Sciatic nerve (tissue), 2 donors: ENCODE measurements at regions of chr6 and their contacts with region 1.

Region 1: DNA sequence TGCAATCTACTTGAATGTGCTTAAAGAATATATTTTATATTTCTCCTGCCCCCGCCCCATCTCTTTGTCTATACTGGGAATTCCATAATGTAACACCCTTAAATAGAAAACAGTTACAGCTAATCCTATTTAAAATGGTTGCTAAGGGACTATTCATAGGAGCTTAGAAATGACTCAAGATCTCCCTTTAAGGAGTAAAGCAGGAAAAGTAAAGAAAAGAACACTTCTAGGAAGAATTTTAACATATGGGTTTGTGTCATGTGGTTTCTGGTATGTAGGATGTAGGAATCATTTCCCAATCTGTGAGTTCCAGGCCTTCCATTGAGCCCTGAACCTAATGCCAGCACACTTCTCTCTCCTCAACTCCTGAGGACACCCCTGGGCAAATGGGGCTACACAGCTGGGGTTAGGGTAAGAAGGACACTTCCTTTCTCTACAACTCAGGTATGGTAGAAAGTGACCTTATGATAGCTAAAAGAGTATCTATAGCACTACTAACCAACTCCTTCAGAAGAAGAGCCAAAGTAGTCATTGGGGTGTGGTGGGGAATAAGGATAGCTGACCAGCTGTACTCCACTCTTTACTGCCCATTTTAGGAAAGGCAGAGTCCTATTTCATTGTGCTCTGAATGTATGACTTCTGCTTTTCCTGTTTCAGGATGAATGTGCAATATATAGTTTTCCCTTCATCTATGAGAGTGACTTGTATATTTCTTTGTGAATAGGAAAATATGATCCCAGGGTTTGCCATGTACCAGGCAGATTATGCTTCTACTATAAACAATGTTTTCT is 27.3 kb downstream of the RIMS1 start:
- DNase-seq: no peak
- ATAC-seq: no peak

Region 2: GRCh38 chr6:70933853-70934252 is 979.8 kb before region 1 on chr6:
- intact Hi-C with region 1: loop called (anchors 5 kb)
- DNase-seq: no peak
- ATAC-seq: no peak

Region 3: DNA sequence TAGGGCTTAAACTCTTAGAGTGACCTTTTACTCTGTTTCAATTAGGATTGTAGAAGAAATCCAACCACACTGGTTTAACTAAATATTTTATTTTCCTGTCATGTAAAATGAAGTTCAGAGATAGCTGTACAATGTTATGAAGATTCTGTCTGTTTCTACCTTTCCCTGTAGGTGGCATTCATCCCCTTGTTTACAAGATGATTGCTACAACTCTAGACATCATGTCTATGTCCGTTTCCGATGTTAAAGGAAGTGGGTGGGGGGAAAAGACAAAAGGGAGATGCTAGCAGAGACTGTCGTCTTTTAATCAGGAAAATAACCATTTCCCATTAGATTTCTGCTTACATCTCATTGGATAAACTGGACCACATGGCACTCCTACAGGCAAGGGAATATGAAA is 58.2 kb before region 1 on chr6:
- intact Hi-C with region 1: no loop called
- DNase-seq: no peak
- ATAC-seq: no peak